Heart left ventricle (tissue), 16 donors: ENCODE measurements at regions of chr4 and their contacts with region 1.

Region 1: GRCh38 chr4:186021461-186022167 is 47.3 kb upstream of the TLR3 start:
- DNase-seq: peak in 1 of 5 donors; percentile 45
- ATAC-seq: peak; percentile 48 to 74 (median 67)
- H3K4me3 ChIP-seq: peak overlapping the region in 7 of 12 donors; percentile 22 to 46 (median 34)
- H3K27ac ChIP-seq: peak overlapping the region in 7 of 12 donors; percentile 12 to 50 (median 37)
- H3K4me1 ChIP-seq: peaks cover 0 to 18% (median 5%) of the 10 kb centered on the region in 12 donors
- H3K27me3 ChIP-seq: no peaks in the 10 kb centered on the region
- CTCF ChIP-seq: peak; percentile 60 to 90 (median 84)
- POLR2A ChIP-seq: no peak

Region 2: DNA sequence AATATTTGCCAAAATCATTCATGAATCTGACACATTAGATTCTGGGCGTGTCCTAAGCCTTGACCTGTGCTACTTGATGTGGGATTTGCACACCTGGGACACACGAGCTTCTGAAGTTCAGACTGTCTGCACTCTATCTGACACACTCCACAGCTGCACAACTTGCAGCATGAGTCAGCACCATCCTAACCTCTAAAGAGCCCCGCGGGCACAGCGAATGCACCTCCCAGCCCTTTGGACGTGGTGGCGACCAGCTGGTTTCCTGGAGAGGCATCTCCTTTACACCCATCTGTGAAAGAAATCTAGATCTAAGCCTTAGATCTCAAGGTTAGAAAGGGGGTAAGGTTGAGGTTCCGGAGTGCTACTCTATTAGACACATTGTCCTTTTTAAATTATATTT is 278.8 kb before region 1 on chr4:
- intact Hi-C with region 1: loop called in 1 of 10 experiments (anchors 10 kb)
- DNase-seq: peak in 1 of 5 donors; percentile 54
- ATAC-seq: peak in 3 of 4 donors; percentile 51 to 66 (median 56)
- H3K4me3 ChIP-seq: no peak overlapping the region
- H3K27ac ChIP-seq: peak overlapping the region in 11 of 12 donors; percentile 1 to 86 (median 32)
- H3K4me1 ChIP-seq: peaks cover 0 to 90% (median 56%) of the 10 kb centered on the region in 12 donors
- H3K27me3 ChIP-seq: no peaks in the 10 kb centered on the region
- CTCF ChIP-seq: no peak
- POLR2A ChIP-seq: no peak

Region 3: GRCh38 chr4:185792384-185793115 is 229.1 kb before region 1 on chr4:
- intact Hi-C with region 1: loop called in 2 of 10 experiments (anchors 10 kb)
- DNase-seq: no peak
- ATAC-seq: no peak
- H3K4me3 ChIP-seq: no peak overlapping the region
- H3K27ac ChIP-seq: peak overlapping the region in 11 of 12 donors; percentile 3 to 62 (median 33)
- H3K4me1 ChIP-seq: peaks cover 5 to 90% (median 30%) of the 10 kb centered on the region in 12 donors
- H3K27me3 ChIP-seq: no peaks in the 10 kb centered on the region
- CTCF ChIP-seq: no peak
- POLR2A ChIP-seq: no peak

Region 4: GRCh38 chr4:185865901-185866328 is 155.7 kb before region 1 on chr4:
- intact Hi-C with region 1: loop called in 3 of 10 experiments (anchors 5 to 10 kb)
- DNase-seq: peak in 2 of 5 donors; percentile 39 to 61
- ATAC-seq: peak; percentile 62 to 79 (median 72)
- H3K4me3 ChIP-seq: no peak overlapping the region
- H3K27ac ChIP-seq: peak overlapping the region; percentile 56 to 94 (median 77)
- H3K4me1 ChIP-seq: peaks cover 0 to 59% (median 7%) of the 10 kb centered on the region in 12 donors
- H3K27me3 ChIP-seq: no peaks in the 10 kb centered on the region
- CTCF ChIP-seq: no peak
- POLR2A ChIP-seq: no peak